Activated CD4-positive, alpha-beta T cell treated with anti-CD3 and anti-CD28 coated beads, Interleukin-2, amount 10 ng/mL, durations not matched to agents 24 days and 14 days (primary cell): ENCODE measurements at regions of chr1 and their contacts with region 1.

Region 1: GRCh38 chr1:226827968-226828513 is 42.4 kb upstream of the PSEN2 start:
- DNase-seq: peak; percentile 98
- H3K4me3 Mint-ChIP-seq: peak overlapping the region; percentile 63
- H3K27ac Mint-ChIP-seq: peak overlapping the region; percentile 92
- H3K4me1 Mint-ChIP-seq: peaks cover 20% of the 10 kb centered on the region
- H3K27me3 Mint-ChIP-seq: no peaks in the 10 kb centered on the region

Region 2: GRCh38 chr1:226547754-226548191 is 280.3 kb before region 1 on chr1:
- intact Hi-C with region 1: loop called (anchors 1 kb)
- DNase-seq: peak; percentile 82
- H3K4me3 Mint-ChIP-seq: no peak overlapping the region
- H3K27ac Mint-ChIP-seq: no peak overlapping the region
- H3K4me1 Mint-ChIP-seq: peaks cover 9% of the 10 kb centered on the region
- H3K27me3 Mint-ChIP-seq: peaks cover 63% of the 10 kb centered on the region

Region 3: GRCh38 chr1:226634166-226634588 is 193.9 kb before region 1 on chr1:
- intact Hi-C with region 1: loop called (anchors 1 kb)
- DNase-seq: peak; percentile 93
- H3K4me3 Mint-ChIP-seq: peak overlapping the region; percentile 33
- H3K27ac Mint-ChIP-seq: peak overlapping the region; percentile 5
- H3K4me1 Mint-ChIP-seq: peaks cover 40% of the 10 kb centered on the region
- H3K27me3 Mint-ChIP-seq: no peaks in the 10 kb centered on the region

Region 4: DNA sequence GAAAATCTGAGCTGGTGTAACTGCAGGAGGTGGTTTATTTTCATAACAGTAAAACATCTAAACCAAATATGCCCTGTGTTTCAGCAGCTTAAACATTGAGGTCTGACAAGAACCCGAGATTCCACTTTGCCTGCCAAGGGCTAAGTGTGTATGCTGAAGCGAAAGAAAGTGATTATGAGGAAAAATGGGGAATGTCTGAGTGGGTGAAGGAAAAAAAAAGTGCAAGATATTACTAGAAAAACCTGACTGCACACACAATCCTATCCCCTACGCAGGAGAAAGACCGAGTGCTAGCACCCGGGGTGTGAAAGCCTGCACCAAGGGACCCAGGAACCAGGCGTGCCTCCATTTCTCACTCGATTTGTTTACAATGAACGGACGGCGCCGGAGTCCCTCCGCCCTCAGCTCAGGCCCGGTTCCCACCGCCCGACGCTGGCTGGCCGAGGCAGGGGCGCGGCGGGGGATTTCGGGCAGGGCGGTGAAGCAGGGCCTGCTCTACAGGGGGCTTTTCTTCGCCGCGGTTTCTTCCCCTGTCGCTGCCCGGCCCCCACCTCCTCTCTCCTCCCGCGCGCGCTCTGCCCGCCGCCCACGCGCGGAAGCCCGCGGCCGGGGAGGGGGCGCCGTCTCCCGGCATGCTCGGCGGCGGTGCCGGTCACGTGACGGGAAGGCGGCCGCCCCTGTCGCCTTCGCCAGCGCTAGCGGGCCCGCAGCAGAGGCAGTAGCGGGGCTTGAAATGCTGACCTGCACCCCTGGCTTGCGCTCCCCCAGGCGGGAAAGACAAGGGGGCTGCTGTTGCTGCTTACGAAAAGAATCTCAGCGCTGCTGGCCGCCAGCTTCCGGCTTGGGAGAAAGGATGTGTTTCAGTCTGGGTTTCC is 124.8 kb before region 1 on chr1:
- intact Hi-C with region 1: loop called (anchors 2 kb)
- DNase-seq: peak; percentile 96
- H3K4me3 Mint-ChIP-seq: peak overlapping the region; percentile 86
- H3K27ac Mint-ChIP-seq: peak overlapping the region; percentile 92
- H3K4me1 Mint-ChIP-seq: peaks cover 48% of the 10 kb centered on the region
- H3K27me3 Mint-ChIP-seq: no peaks in the 10 kb centered on the region

Region 5: DNA sequence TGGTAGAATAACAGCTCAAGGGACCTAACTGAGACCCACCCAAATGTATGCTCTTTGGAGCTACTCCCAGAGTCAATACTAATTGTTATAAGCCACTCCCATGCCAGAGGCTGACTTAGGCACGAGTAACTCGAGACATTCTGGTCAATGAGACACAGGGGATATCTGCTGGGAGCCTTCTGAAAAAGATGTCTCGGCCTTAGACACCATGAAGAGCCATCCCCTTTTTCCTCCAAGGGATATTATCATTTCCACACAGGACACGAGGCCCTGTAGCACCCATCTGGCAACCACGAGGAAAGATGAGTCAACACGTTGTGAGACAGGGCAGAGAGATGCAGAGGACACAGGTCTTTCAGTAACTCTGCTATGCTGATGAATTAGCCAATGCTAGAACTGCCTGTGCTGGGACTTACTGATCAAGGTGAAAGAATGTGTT is 119.7 kb before region 1 on chr1:
- intact Hi-C with region 1: loop called (anchors 2 kb)
- DNase-seq: no peak
- H3K4me3 Mint-ChIP-seq: peak overlapping the region; percentile 71
- H3K27ac Mint-ChIP-seq: peak overlapping the region; percentile 93
- H3K4me1 Mint-ChIP-seq: peaks cover 69% of the 10 kb centered on the region
- H3K27me3 Mint-ChIP-seq: no peaks in the 10 kb centered on the region

Region 6: DNA sequence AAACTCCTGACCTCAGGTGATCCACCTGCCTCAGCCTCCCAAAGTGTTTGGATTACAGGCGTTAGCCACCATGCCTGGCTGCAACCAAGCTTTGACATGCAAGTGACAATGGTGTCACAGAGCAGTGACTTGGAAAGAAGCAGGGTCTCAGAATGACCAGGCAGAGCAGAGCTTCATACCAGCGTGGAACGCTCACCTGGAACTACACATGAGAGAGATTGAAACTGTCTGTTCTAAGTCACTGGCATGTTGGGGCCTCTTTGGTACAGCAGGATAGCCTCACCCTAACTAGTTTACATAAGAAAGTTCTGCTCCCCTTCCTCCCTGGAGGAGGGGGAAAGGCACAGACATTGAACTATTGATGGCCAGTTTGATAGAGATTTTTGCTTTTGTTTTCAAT is 41.5 kb before region 1 on chr1:
- intact Hi-C with region 1: no loop called
- DNase-seq: no peak
- H3K4me3 Mint-ChIP-seq: no peak overlapping the region
- H3K27ac Mint-ChIP-seq: no peak overlapping the region
- H3K4me1 Mint-ChIP-seq: peaks cover 2% of the 10 kb centered on the region
- H3K27me3 Mint-ChIP-seq: peaks cover 11% of the 10 kb centered on the region

Region 7: GRCh38 chr1:226798427-226799411 is 29.3 kb before region 1 on chr1:
- intact Hi-C with region 1: loop called (anchors 2 kb)
- DNase-seq: peak; percentile 89
- H3K4me3 Mint-ChIP-seq: peak overlapping the region; percentile 69
- H3K27ac Mint-ChIP-seq: peak overlapping the region; percentile 94
- H3K4me1 Mint-ChIP-seq: peaks cover 30% of the 10 kb centered on the region
- H3K27me3 Mint-ChIP-seq: peaks cover 12% of the 10 kb centered on the region